GM10248 (cell line): ENCODE measurements at regions of chr17 and their contacts with region 1.

Region 1: DNA sequence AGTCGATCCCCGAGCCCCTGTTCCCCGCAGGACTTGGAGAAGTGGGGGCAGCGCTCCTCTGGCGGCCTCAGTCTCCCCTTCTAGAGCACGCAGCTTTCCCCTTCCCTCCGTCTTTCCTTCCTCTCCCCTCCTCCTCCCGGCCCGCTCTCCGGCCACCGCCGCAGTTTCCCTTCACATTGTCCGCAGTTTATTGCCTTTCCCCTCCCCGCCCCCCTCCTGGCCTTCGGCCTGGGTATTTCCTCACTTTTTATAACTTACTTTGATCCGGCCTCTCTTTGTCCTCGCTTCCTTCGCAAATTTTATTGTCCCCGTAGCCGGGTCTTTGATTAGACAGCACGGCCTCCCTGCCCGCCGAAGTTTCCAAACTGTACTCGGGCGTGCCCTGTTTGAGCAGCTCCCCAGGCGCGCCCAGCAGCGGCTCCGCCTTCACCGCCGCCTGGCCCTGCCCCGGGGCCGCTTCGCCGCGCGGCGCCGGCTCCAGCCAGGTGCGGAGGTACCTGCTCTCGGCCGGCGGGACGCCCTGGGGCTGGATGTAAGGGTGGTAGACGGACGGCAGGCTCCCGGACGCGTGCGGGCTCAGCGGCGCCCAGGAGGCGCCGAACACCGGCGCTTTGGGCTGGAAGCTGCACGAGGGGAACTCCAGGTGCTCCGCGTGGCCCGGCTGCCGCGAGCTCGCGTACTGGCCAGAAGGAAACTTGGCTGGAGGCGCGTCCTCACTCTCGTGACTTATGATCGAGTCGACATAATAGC is 488 bp downstream of the HOXB9 start:
- DNase-seq: peak; percentile 69
- CTCF ChIP-seq: no peak

Region 2: DNA sequence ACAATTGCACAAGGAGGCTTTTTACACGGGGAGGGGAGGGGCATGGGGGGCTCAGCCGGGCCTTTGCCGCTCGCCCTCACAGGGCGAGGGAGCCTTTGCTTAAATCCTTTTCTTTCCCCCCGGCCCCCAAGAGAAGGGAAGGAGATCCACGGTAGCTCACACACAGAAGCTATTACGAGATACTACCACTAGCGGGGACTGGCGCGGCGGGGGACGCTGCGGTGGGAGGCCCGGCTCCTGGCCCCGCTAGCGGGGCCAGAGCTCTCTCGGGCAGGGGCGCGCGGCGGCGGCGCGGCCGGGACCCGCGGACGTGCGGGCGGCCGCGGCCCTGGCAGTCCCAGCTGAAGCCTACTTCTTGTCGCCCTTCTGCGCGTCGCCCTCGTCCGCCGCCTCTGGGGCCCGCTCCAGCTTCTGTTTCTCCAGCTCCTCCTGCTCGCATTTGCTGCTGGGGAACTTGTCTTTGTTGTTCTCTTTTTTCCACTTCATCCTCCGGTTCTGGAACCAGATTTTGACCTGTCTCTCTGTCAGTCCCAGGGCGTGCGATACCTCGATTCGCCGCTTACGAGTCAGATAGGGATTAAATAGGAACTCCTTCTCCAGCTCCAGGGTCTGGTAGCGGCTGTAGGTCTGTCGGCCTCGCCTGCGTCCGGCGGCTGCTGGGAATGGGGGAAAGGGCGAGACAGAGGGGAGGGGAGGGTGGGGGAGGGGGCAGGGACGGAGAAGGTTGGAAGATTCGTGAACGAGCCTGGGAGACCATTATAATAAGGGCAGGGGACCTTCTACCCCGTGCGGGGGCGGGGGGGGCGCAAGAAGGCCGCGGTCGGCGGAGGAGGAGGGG is 12.6 kb before region 1 on chr17:
- CTCF ChIA-PET with region 1: interaction called, 31 read pairs
- POLR2A ChIA-PET with region 1: no interaction called
- DNase-seq: peak; percentile 69
- CTCF ChIP-seq: no peak

Region 3: DNA sequence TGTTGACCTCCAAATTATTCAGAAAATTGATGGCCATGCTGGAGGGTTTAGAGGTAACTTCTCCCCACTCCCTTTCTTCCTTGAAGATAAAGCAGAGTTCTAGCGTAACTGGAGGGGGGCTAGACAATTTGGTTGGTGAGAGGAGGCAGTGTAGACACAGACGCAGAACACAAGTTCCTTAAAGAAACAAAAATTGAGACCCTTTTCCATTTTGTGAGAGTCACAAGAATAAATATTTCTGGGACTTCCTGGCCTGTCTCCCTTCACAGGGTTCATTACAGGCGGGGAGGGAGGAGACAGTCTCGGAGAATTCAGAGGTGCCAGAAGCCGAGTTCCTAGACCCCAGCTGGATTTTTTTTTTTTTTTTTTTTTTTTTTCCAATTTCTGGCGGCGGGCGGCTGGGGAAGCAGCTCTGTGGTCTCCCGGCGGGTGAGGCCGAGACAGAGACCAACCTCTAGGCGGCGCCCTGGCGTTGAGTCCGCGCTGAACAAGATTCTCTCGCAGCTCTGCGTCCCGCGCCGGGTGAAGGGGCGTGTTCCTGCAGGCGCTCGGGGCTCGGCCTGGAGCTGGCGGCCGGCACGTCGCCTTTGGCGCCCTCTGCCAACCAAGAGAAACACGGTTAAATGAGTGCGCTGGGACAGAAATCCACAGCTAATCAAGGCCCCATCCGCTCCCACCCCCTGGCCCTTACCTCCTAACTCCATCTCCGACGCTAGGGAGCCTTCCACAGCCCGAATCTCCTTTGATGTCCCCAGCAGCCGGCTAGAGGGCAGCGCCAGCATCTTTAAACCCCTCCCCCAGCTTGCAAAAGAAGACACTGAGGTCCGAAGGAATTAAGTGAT is 10.7 kb after region 1 on chr17:
- CTCF ChIA-PET with region 1: interaction called, 28 read pairs
- POLR2A ChIA-PET with region 1: no interaction called
- DNase-seq: peak; percentile 82
- CTCF ChIP-seq: peak; percentile 78

Region 4: GRCh38 chr17:48663134-48663924 is 37.7 kb after region 1 on chr17:
- CTCF ChIA-PET with region 1: no interaction called
- POLR2A ChIA-PET with region 1: no interaction called
- DNase-seq: no peak
- CTCF ChIP-seq: no peak